Naive thymus-derived CD4-positive, alpha-beta T cell (primary cell): ENCODE measurements at regions of chr17 and their contacts with region 1.

Region 1: DNA sequence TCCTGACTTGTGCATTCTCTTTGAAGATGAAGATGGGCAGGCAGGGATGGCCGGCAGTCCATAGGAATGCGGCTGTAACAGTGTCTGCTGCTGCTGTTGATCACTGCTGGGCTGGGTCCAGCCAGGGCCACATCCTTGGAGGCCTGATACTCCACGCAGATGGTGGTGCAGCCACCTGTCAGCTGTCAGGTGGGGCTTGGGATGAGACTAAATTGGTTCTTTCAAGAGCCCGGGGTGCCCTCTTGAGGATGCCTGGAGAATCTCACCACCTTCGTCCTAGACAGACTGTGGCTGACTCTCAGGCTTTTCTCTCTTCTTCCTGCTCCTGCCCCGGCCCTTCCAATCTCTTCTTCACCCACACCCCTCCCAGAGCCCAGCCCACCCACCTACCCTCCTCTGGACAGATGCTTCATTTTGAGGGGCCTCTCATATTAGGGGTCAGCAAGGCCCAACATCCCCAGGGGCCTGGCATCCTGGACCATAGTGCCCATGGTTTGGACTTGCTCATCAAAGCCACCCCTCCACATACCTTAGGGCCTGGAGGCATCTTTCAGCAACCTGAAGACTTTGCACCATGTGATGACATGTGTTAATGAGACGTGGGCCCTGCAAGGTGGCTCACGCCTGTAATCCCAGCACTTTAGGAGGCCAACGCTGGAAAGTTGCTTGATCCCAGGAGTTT is 19.1 kb downstream of the OSBPL7 start:
- DNase-seq: peak in 8 of 9 donors; percentile 24 to 61 (median 50)
- ATAC-seq: peak; percentile 89
- H3K4me3 ChIP-seq: no peak overlapping the region
- H3K4me3 Mint-ChIP-seq: no peak overlapping the region
- H3K27ac ChIP-seq: no peak overlapping the region
- H3K27ac Mint-ChIP-seq: no peak overlapping the region
- H3K4me1 ChIP-seq: no peaks in the 10 kb centered on the region
- H3K4me1 Mint-ChIP-seq: peaks cover 0 to 4% (median 0%) of the 10 kb centered on the region in 7 donors
- H3K27me3 ChIP-seq: no peaks in the 10 kb centered on the region
- H3K27me3 Mint-ChIP-seq: peaks cover 0 to 9% (median 4%) of the 10 kb centered on the region in 5 donors

Region 2: DNA sequence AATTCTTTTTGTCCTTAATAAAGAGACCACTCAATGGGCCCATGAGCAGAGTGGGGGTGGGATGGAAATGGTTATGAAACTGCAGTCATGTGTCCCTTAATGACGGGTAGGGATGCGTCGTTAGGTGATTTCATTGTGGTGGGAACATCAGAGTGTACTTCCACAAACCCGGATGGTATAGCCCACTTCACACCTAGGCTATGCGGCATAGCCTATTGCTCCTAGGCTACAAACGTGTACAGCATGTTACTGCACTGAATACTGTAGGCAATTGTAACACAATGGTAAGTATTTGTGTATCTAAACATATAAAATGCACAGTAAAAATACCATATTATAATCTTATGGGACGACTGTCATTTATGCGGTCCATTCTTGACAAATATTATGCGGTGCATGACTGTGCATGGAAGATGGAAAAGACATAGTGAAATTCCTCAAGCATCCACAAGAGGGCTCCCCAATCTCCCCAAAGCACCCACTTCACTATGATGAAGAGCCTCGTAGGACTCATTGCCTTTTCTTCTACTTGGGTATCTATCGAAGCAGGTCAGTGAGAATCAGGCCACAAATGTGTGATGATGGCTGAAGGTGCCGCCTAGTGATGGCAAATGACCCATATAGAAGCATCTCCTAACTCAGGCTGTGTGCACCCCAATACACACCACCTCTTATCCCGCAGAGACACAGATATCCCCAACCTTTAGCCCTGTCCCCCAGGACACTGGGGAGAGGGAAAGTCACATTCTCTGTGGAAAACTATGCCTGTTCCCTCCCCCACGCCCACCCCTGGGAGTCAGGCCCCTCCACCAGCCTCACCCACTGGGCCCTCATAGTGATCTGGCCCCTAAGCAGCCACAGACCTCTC is 25.9 kb before region 1 on chr17:
- CTCF ChIA-PET with region 1: no interaction called
- POLR2A ChIA-PET with region 1: no interaction called
- intact Hi-C with region 1: loop called (anchors 1 kb)
- DNase-seq: peak in 7 of 9 donors; percentile 17 to 59 (median 41)
- ATAC-seq: peak; percentile 85
- H3K4me3 ChIP-seq: no peak overlapping the region
- H3K4me3 Mint-ChIP-seq: no peak overlapping the region
- H3K27ac ChIP-seq: no peak overlapping the region
- H3K27ac Mint-ChIP-seq: peak overlapping the region in 1 of 9 donors; percentile 38
- H3K4me1 ChIP-seq: no peaks in the 10 kb centered on the region
- H3K4me1 Mint-ChIP-seq: peaks cover 0 to 5% (median 0%) of the 10 kb centered on the region in 7 donors
- H3K27me3 ChIP-seq: peaks cover 0 to 11% of the 10 kb centered on the region in 2 donors
- H3K27me3 Mint-ChIP-seq: peaks cover 35 to 60% (median 45%) of the 10 kb centered on the region in 5 donors

Region 3: DNA sequence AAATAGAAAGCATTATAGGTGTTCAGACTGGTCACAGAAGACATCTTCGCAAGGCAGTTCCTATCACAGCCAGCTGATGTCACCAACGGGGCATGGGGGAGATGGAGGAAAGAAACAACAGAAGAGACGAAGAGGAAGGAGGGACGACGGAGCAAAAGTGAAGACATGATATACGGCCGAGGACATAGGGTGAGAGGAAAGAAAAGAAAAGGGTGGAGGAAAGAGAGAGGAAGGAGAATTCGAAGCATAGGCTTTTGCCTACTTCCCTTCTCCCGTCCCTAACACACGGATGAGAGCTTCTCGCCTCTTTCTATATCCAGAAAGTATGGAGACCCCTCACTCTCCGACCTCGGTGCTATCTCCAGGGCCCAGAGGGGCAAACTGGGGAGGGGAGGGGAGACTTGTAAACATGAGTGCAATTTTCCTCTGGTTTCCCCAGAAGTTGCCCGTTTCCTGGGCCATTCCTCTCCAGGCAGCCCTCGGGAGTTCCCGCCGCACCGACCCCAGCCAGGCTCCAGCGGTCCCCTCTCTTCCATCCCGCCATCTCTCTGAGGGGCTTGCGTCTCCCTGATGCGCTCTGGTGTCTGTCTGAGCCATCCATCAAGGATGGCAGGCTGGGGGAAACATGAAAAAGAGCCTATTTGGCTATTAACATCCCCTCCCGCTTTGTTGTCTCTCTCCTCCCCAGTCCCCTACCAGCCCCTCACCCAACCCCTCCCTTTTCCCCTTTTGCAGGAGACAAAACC is 209.1 kb after region 1 on chr17:
- CTCF ChIA-PET with region 1: no interaction called
- POLR2A ChIA-PET with region 1: no interaction called
- intact Hi-C with region 1: no loop called
- DNase-seq: peak in 7 of 9 donors; percentile 20 to 34 (median 32)
- ATAC-seq: peak; percentile 74
- H3K4me3 ChIP-seq: peak overlapping the region; percentile 47
- H3K4me3 Mint-ChIP-seq: peak overlapping the region; percentile 70 to 90 (median 78)
- H3K27ac ChIP-seq: no peak overlapping the region
- H3K27ac Mint-ChIP-seq: peak overlapping the region in 1 of 9 donors; percentile 48
- H3K4me1 ChIP-seq: peaks cover 9% of the 10 kb centered on the region in 2 donors
- H3K4me1 Mint-ChIP-seq: peaks cover 9 to 25% (median 13%) of the 10 kb centered on the region in 7 donors
- H3K27me3 ChIP-seq: peaks cover 7 to 10% of the 10 kb centered on the region in 2 donors
- H3K27me3 Mint-ChIP-seq: peaks cover 44 to 66% (median 55%) of the 10 kb centered on the region in 5 donors

Region 4: DNA sequence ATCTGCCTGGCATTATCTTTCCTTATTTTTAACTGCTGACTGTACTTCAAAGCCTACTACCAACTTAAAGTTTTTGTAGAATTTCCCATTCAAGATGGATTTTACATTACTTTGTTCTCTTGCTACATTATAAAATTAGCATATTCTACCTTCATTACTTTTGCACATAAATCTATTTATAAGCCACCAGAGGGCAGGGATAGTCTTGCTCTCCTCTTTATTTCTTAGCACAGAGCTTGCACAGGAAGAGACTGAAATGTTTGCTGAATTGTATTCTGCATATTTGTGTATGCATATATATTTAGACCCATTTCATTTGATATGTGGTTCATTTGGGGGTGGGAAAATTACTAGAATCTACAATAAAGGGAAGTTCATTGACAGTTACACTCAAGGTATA is 519.6 kb after region 1 on chr17:
- CTCF ChIA-PET with region 1: no interaction called
- POLR2A ChIA-PET with region 1: no interaction called
- intact Hi-C with region 1: no loop called
- DNase-seq: no peak
- ATAC-seq: no peak
- H3K4me3 ChIP-seq: no peak overlapping the region
- H3K4me3 Mint-ChIP-seq: no peak overlapping the region
- H3K27ac ChIP-seq: no peak overlapping the region
- H3K27ac Mint-ChIP-seq: no peak overlapping the region
- H3K4me1 ChIP-seq: no peaks in the 10 kb centered on the region
- H3K4me1 Mint-ChIP-seq: peaks cover 9 to 48% (median 26%) of the 10 kb centered on the region in 7 donors
- H3K27me3 ChIP-seq: no peaks in the 10 kb centered on the region
- H3K27me3 Mint-ChIP-seq: no peaks in the 10 kb centered on the region